Activated naive CD4-positive, alpha-beta T cell treated with anti-CD3 and anti-CD28 coated beads for 36 hours (primary cell): ENCODE measurements at regions of chr4 and their contacts with region 1.

Region 1: DNA sequence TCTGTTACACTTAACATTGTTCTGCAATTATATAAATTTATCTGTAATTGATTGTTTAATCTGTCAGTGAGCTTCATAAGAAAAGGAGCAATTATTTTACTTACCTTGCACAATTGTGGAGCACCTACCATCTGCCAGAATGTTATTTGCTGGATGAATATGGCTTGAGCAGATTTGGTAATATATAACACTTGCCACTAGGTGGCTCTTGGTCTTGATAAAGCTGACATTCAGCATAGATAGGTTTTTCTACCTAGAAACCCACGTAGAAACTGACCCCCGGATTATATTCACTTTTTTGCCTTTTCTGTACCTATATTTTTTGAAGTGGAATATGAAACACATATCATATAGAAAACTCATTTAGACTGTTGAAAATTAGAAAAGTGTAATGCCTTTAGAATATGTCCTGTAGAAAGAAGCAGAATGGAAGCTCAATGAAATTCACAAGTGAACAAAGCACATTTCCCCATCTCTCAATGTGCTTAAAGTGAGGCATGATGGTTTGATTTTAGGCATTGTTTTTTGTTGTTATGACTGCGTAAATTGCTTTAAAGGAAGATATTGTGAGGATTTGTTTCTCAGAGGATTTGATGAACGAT is 9.5 kb downstream of the RBPJ start:
- DNase-seq: no peak
- H3K4me3 Mint-ChIP-seq: no peak overlapping the region
- H3K27ac Mint-ChIP-seq: no peak overlapping the region
- H3K4me1 Mint-ChIP-seq: peaks cover 40% of the 10 kb centered on the region
- H3K27me3 Mint-ChIP-seq: no peaks in the 10 kb centered on the region

Region 2: DNA sequence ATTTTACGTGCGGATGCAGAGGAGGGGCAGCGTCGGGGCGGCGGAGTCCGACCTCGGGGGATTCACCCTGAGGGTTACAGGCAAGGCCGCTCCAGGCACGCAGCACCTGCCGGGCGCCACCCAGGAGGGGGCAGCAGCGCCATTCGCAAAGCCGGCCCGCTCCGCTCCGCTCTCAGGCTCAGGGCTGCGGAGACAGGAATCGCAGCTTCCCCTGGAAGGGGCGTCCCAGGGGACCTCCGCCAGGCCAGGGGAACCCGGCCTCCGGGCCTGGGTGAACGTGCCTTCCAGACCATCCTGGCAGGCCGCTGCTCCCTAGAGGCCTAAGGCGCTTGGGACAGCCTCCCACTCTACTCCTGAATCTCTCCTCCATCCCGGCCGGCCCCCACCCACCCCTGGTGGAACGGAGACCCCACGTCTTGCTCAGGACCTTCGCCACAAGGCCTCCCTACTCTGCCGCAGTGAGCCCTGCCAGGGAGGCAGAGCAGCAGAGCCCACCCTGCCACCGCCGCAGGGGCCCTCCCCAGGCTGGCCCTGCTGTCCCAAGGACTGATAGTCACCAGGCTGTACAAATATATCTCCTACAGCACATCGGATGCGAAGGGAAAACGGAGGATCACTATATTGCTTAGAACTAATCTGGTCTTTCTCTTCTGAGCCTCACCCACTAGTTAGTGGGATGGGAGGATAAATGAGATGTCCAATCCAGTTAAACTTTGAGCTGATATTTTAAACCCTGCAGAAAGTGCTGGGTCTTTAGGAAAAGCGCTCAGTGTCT is 301.3 kb before region 1 on chr4:
- CTCF ChIA-PET with region 1: interaction called, 52 read pairs
- intact Hi-C with region 1: loop called (anchors 1 kb)
- DNase-seq: peak; percentile 80
- H3K4me3 Mint-ChIP-seq: no peak overlapping the region
- H3K27ac Mint-ChIP-seq: no peak overlapping the region
- H3K4me1 Mint-ChIP-seq: peaks cover 12% of the 10 kb centered on the region
- H3K27me3 Mint-ChIP-seq: peaks cover 16% of the 10 kb centered on the region

Region 3: DNA sequence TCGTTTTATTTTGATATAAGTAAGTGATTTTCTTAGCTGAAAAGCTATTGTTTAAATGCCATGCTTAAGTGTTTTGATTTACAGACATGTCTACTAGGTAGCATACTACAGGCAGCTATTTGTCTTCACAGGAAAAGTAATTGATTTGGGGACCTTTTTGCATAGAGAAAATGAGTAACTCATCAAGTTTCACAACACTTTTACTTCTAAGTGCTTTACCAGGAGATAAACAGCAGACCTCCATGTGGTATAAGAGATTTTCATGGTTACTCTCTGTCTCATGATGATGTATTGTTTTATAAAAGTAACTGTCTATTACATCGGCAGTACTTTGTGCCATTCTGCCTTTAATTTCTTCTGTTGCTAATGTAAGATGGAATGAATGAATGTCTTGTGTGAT is 19.2 kb after region 1 on chr4:
- CTCF ChIA-PET with region 1: interaction called, 33 read pairs
- intact Hi-C with region 1: no loop called
- DNase-seq: no peak
- H3K4me3 Mint-ChIP-seq: no peak overlapping the region
- H3K27ac Mint-ChIP-seq: no peak overlapping the region
- H3K4me1 Mint-ChIP-seq: peaks cover 64% of the 10 kb centered on the region
- H3K27me3 Mint-ChIP-seq: no peaks in the 10 kb centered on the region

Region 4: DNA sequence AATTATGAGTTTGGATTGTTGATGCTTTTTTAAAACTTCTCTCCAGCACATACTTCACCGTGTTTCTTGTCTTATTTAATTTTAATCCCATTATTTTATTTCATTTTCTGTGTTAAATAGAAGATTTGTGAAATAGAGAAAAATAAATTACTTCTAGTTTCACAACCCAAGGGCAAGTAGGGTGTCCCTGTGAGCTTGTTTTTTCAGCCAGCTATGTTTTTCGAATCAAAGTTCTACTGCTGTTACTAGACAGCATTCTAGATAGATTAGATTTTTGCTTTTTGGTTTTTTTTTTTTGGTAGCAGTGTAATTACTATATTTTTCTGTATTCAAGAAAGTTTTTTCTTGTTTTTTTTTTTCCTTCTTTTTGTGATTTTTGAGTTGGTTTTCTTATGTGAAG is 50.5 kb after region 1 on chr4:
- CTCF ChIA-PET with region 1: interaction called, 13 read pairs
- intact Hi-C with region 1: no loop called
- DNase-seq: no peak
- H3K4me3 Mint-ChIP-seq: no peak overlapping the region
- H3K27ac Mint-ChIP-seq: no peak overlapping the region
- H3K4me1 Mint-ChIP-seq: peaks cover 38% of the 10 kb centered on the region
- H3K27me3 Mint-ChIP-seq: no peaks in the 10 kb centered on the region

Region 5: DNA sequence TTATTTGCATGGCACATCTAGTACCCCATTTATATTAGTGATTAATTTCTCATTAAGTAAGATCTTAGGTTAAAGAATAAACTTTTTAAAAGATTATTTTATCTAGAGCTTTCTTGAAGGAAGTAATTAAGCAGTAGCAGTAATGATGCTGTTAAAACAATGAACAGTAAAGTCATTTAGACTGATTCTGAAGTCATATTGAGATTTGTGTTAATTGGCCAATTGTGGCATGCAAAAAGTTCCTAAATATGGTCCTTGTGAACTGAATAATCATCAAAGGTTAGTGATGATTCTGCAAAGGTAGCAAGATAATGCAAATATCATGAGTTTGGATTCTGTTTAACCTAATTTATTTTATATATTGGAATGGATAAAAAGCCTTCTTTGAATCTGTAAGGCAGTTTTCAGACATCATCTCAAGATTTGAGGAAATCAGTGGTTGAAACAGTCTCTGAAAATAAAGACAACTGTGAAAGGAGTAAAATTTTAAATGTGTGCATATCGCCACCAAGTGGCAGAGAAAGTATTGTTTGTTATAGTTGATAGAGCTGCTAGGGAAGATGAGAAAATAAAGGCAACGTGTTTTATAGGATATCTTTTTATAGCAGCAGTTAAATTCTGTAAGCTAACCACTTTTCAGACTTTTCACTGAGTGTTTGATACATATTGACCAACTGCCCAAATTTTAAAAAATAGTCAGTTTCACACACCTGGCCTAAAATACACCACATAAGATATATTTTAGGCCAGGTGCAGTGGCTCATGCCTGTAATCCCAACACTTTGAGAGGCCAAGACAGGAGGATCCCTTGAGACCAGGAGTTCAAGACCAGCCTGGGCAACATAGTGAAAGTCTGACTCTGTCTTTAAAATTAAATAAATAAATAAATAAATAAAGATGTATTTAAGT is 80.4 kb after region 1 on chr4:
- CTCF ChIA-PET with region 1: interaction called, 77 read pairs
- intact Hi-C with region 1: loop called (anchors 1 kb)
- DNase-seq: peak; percentile 49
- H3K4me3 Mint-ChIP-seq: no peak overlapping the region
- H3K27ac Mint-ChIP-seq: no peak overlapping the region
- H3K4me1 Mint-ChIP-seq: peaks cover 5% of the 10 kb centered on the region
- H3K27me3 Mint-ChIP-seq: no peaks in the 10 kb centered on the region

Region 6: DNA sequence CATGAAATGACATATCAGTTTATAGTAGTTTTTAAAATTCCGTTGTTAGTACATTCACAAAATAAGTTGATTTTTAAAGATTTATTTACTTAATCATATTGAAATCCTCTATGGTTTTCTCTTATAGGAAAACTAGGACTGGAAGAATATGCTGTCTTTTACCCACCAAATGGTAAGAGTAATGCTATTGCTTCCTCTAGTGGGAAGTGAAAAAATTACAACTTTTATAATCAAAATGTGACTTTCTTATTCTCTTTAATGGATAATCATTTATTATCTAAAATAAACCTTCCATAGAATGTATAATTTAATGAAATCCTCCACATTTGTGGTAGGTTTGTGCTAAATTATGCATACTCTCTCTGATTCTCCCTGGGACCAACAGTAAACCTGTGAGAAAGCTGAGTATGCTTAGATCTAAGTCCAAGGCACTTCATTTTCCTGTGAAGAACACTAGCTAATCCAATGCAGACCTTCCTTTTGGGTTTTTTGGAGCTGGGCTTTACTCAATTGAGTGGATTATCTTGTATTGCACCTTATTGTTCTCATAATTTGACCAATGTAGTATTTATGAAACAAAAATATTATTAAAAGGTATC is 389.8 kb after region 1 on chr4:
- CTCF ChIA-PET with region 1: interaction called, 3 read pairs
- intact Hi-C with region 1: loop called (anchors 2 kb)
- DNase-seq: no peak
- H3K4me3 Mint-ChIP-seq: no peak overlapping the region
- H3K27ac Mint-ChIP-seq: no peak overlapping the region
- H3K4me1 Mint-ChIP-seq: peaks cover 10% of the 10 kb centered on the region
- H3K27me3 Mint-ChIP-seq: no peaks in the 10 kb centered on the region